Ovary (tissue), 10 donors: ENCODE measurements at regions of chr9 and their contacts with region 1.

Region 1: GRCh38 chr9:132507746-132508469 is 74.5 kb upstream of the BARHL1 start:
- DNase-seq: peak; percentile 45 to 75 (median 70)
- H3K4me3 ChIP-seq: no peak overlapping the region
- H3K27ac ChIP-seq: no peak overlapping the region
- H3K4me1 ChIP-seq: peaks cover 3% of the 10 kb centered on the region
- H3K27me3 ChIP-seq: no peaks in the 10 kb centered on the region
- CTCF ChIP-seq: peak; percentile 32 to 73 (median 45)
- EP300 ChIP-seq: no peak
- POLR2A ChIP-seq: no peak

Region 2: GRCh38 chr9:131668439-131669268 is 839.3 kb before region 1 on chr9:
- intact Hi-C with region 1: no loop called
- DNase-seq: no peak
- H3K4me3 ChIP-seq: no peak overlapping the region
- H3K27ac ChIP-seq: no peak overlapping the region
- H3K4me1 ChIP-seq: peaks cover 8% of the 10 kb centered on the region
- H3K27me3 ChIP-seq: no peaks in the 10 kb centered on the region
- CTCF ChIP-seq: no peak
- EP300 ChIP-seq: no peak
- POLR2A ChIP-seq: no peak

Region 3: GRCh38 chr9:131982671-131983239 is 525.2 kb before region 1 on chr9:
- intact Hi-C with region 1: no loop called
- DNase-seq: no peak
- H3K4me3 ChIP-seq: no peak overlapping the region
- H3K27ac ChIP-seq: no peak overlapping the region
- H3K4me1 ChIP-seq: no peaks in the 10 kb centered on the region
- H3K27me3 ChIP-seq: no peaks in the 10 kb centered on the region
- CTCF ChIP-seq: no peak
- EP300 ChIP-seq: no peak
- POLR2A ChIP-seq: no peak

Region 4: GRCh38 chr9:132135456-132135855 is 372.5 kb before region 1 on chr9:
- intact Hi-C with region 1: no loop called
- DNase-seq: no peak
- H3K4me3 ChIP-seq: no peak overlapping the region
- H3K27ac ChIP-seq: no peak overlapping the region
- H3K4me1 ChIP-seq: no peaks in the 10 kb centered on the region
- H3K27me3 ChIP-seq: no peaks in the 10 kb centered on the region
- CTCF ChIP-seq: no peak
- EP300 ChIP-seq: no peak
- POLR2A ChIP-seq: no peak

Region 5: GRCh38 chr9:132575005-132575609 is 67.2 kb after region 1 on chr9:
- intact Hi-C with region 1: loop called in 2 of 4 experiments (anchors 10 kb)
- DNase-seq: peak in 4 of 5 donors; percentile 21 to 73 (median 44)
- H3K4me3 ChIP-seq: no peak overlapping the region
- H3K27ac ChIP-seq: no peak overlapping the region
- H3K4me1 ChIP-seq: no peaks in the 10 kb centered on the region
- H3K27me3 ChIP-seq: peaks cover 4% of the 10 kb centered on the region
- CTCF ChIP-seq: peak in 1 of 3 donors; percentile 11
- EP300 ChIP-seq: no peak
- POLR2A ChIP-seq: no peak

Region 6: GRCh38 chr9:132768932-132769905 is 261.3 kb after region 1 on chr9:
- intact Hi-C with region 1: no loop called
- DNase-seq: peak; percentile 53 to 76 (median 58)
- H3K4me3 ChIP-seq: peak overlapping the region; percentile 78
- H3K27ac ChIP-seq: peak overlapping the region; percentile 70 to 80
- H3K4me1 ChIP-seq: peaks cover 4% of the 10 kb centered on the region
- H3K27me3 ChIP-seq: no peaks in the 10 kb centered on the region
- CTCF ChIP-seq: no peak
- EP300 ChIP-seq: no peak
- POLR2A ChIP-seq: no peak

Region 7: DNA sequence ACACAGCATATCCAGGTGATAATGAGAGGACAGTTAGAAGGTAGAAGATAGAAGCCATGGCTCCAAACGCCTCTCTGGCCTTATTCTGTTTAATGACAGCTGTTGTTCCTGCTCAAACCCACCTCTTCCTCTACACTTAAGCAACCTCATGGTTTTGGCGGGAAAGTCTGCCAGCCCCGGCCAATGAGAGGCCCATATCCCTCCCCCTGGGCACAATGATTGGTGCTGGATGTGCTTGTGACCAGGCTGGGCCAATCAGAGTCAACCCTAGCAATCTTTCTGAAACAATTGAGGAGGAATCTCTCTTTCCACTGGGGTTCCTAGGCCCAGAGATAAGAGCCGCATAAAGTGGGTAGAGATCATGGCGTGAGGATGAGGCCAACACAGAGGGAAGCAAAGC is 465.8 kb after region 1 on chr9:
- intact Hi-C with region 1: loop called in 2 of 4 experiments (anchors 10 kb)
- DNase-seq: no peak
- H3K4me3 ChIP-seq: no peak overlapping the region
- H3K27ac ChIP-seq: no peak overlapping the region
- H3K4me1 ChIP-seq: peaks cover 4% of the 10 kb centered on the region
- H3K27me3 ChIP-seq: no peaks in the 10 kb centered on the region
- CTCF ChIP-seq: no peak
- EP300 ChIP-seq: no peak
- POLR2A ChIP-seq: no peak